ENCODE measurements at regions of chr19 and their contacts with region 1.

Region 1: DNA sequence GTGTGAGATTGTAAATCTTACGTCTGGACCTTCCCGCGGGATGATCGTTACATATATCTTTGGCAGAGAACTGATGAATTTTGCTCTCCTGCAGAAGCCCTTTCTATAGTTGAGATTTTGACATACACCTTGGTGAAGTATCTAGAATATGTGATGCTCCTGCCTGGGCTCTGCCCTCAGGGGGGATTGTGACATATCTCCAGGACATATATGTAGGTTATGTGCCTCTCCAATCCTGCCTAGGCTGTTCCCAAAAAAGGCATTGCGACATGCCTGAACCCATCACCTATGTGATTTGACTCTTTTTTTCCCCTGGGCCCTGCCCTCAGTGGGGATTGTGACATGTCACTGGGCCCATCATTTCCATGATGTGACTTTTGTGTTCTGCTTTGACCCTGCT is 76.6 kb downstream of the ZNF208 start:
- DNase-seq: no peak
- H3K4me3 Mint-ChIP-seq: no peak overlapping the region
- H3K27ac Mint-ChIP-seq: no peak overlapping the region
- H3K4me1 Mint-ChIP-seq: no peaks in the 10 kb centered on the region
- H3K27me3 Mint-ChIP-seq: no peaks in the 10 kb centered on the region

Region 2: GRCh38 chr19:21947775-21948174 is 13.6 kb after region 1 on chr19:
- intact Hi-C with region 1: no loop called
- DNase-seq: no peak
- H3K4me3 Mint-ChIP-seq: no peak overlapping the region
- H3K27ac Mint-ChIP-seq: no peak overlapping the region
- H3K4me1 Mint-ChIP-seq: no peaks in the 10 kb centered on the region
- H3K27me3 Mint-ChIP-seq: no peaks in the 10 kb centered on the region

Region 3: GRCh38 chr19:22935151-22935550 is 1001.0 kb after region 1 on chr19:
- intact Hi-C with region 1: loop called (anchors 10 kb)
- DNase-seq: no peak
- H3K4me3 Mint-ChIP-seq: no peak overlapping the region
- H3K27ac Mint-ChIP-seq: no peak overlapping the region
- H3K4me1 Mint-ChIP-seq: no peaks in the 10 kb centered on the region
- H3K27me3 Mint-ChIP-seq: no peaks in the 10 kb centered on the region

Measured in activated T-helper 1 cell treated with anti-CD3 and anti-CD28 coated beads, Interleukin-12 subunit alpha, Interleukin-12 subunit beta, Interleukin-2, Interleukin-4 antibody, amounts not matched to agents 30 ng/mL and 10 ng/mL and 1 ng/mL, durations not matched to agents 14 hours and 24 hours and 36 hours (primary cell).